Heart left ventricle (tissue), 16 donors: ENCODE measurements at regions of chr4 and their contacts with region 1.

Region 1: DNA sequence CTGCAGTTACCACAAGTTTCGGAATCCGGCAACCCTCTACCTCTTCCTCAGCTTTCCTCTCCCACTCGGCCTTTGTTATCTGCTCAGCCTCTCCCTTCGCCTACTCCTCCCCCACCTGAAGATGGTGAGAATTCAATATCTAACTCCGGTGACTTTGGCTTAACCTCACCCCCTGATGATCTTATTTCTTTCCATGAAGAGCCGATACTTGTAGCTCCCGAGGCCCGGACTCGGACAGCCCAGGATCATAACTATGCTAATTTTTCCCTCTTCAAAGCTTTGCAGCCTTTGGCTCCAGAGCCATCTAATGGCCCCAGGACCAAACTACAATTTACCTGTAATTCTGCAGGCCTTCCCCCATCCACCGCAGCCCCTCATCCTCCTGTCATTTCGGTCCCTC is 32.0 kb upstream of the MGST2 start:
- DNase-seq: peak in 4 of 5 donors; percentile 20 to 57 (median 32)
- ATAC-seq: peak; percentile 92 to 98 (median 95)
- H3K4me3 ChIP-seq: peak overlapping the region in 11 of 12 donors; percentile 13 to 58 (median 42)
- H3K27ac ChIP-seq: peak overlapping the region in 9 of 12 donors; percentile 9 to 54 (median 42)
- H3K4me1 ChIP-seq: peaks cover 0 to 7% (median 0%) of the 10 kb centered on the region in 12 donors
- H3K27me3 ChIP-seq: no peaks in the 10 kb centered on the region
- CTCF ChIP-seq: peak; percentile 26 to 71 (median 62)
- POLR2A ChIP-seq: no peak

Region 2: GRCh38 chr4:139030614-139031235 is 602.9 kb before region 1 on chr4:
- intact Hi-C with region 1: loop called in 1 of 10 experiments (anchors 10 kb)
- DNase-seq: peak in 4 of 5 donors; percentile 63 to 75 (median 66)
- ATAC-seq: peak in 3 of 4 donors; percentile 28 to 47 (median 33)
- H3K4me3 ChIP-seq: no peak overlapping the region
- H3K27ac ChIP-seq: peak overlapping the region in 2 of 12 donors; percentile 90 to 93
- H3K4me1 ChIP-seq: peaks cover 0 to 20% (median 11%) of the 10 kb centered on the region in 12 donors
- H3K27me3 ChIP-seq: no peaks in the 10 kb centered on the region
- CTCF ChIP-seq: peak; percentile 61 to 87 (median 79)
- POLR2A ChIP-seq: no peak

Region 3: GRCh38 chr4:139416073-139416673 is 217.5 kb before region 1 on chr4:
- intact Hi-C with region 1: loop called in 5 of 10 experiments (anchors 5 to 10 kb)
- DNase-seq: no peak
- ATAC-seq: peak in 1 of 4 donors; percentile 36
- H3K4me3 ChIP-seq: no peak overlapping the region
- H3K27ac ChIP-seq: no peak overlapping the region
- H3K4me1 ChIP-seq: peaks cover 0 to 18% (median 5%) of the 10 kb centered on the region in 12 donors
- H3K27me3 ChIP-seq: no peaks in the 10 kb centered on the region
- CTCF ChIP-seq: peak; percentile 60 to 84 (median 72)
- POLR2A ChIP-seq: no peak

Region 4: DNA sequence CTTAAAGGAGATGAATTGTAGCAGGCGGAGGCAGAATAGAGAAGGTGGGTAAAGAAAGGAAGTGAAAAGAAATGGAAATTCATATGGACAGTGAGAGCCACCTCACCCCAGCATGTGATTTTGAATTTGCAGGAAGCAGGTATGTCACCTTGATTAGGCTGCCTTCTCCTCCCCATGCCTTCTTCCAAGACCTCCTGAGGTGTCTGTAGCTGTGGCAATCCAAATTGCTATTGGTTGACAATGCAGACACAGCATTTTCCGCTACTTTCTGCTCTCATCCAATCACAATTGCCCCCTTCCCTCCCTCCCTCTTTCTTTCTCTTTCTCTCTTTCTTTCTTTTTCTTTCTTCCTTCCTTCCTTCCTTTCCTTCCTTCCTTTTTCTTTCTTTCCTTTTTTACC is 141.2 kb before region 1 on chr4:
- intact Hi-C with region 1: loop called in 7 of 10 experiments (anchors 2 to 10 kb)
- DNase-seq: no peak
- ATAC-seq: no peak
- H3K4me3 ChIP-seq: no peak overlapping the region
- H3K27ac ChIP-seq: no peak overlapping the region
- H3K4me1 ChIP-seq: peaks cover 0 to 8% (median 0%) of the 10 kb centered on the region in 12 donors
- H3K27me3 ChIP-seq: no peaks in the 10 kb centered on the region
- CTCF ChIP-seq: no peak
- POLR2A ChIP-seq: no peak

Region 5: GRCh38 chr4:139501927-139502899 is 131.4 kb before region 1 on chr4:
- intact Hi-C with region 1: loop called in 9 of 10 experiments (anchors 2 to 10 kb)
- DNase-seq: no peak
- ATAC-seq: no peak
- H3K4me3 ChIP-seq: no peak overlapping the region
- H3K27ac ChIP-seq: no peak overlapping the region
- H3K4me1 ChIP-seq: peaks cover 0 to 17% (median 0%) of the 10 kb centered on the region in 12 donors
- H3K27me3 ChIP-seq: no peaks in the 10 kb centered on the region
- CTCF ChIP-seq: no peak
- POLR2A ChIP-seq: no peak

Region 6: GRCh38 chr4:139509727-139510410 is 123.8 kb before region 1 on chr4:
- intact Hi-C with region 1: loop called in 2 of 10 experiments (anchors 10 kb)
- DNase-seq: peak in 2 of 5 donors; percentile 27 to 40
- ATAC-seq: peak; percentile 52 to 72 (median 70)
- H3K4me3 ChIP-seq: no peak overlapping the region
- H3K27ac ChIP-seq: peak overlapping the region in 3 of 12 donors; percentile 6 to 47 (median 29)
- H3K4me1 ChIP-seq: peaks cover 0 to 22% (median 8%) of the 10 kb centered on the region in 12 donors
- H3K27me3 ChIP-seq: no peaks in the 10 kb centered on the region
- CTCF ChIP-seq: peak; percentile 22 to 63 (median 48)
- POLR2A ChIP-seq: no peak

Region 7: GRCh38 chr4:139603576-139604387 is 29.9 kb before region 1 on chr4:
- intact Hi-C with region 1: loop called in 1 of 10 experiments (anchors 2 kb)
- DNase-seq: peak in 2 of 5 donors; percentile 26 to 31
- ATAC-seq: peak in 3 of 4 donors; percentile 62 to 63 (median 63)
- H3K4me3 ChIP-seq: no peak overlapping the region
- H3K27ac ChIP-seq: no peak overlapping the region
- H3K4me1 ChIP-seq: peaks cover 0 to 15% (median 2%) of the 10 kb centered on the region in 12 donors
- H3K27me3 ChIP-seq: no peaks in the 10 kb centered on the region
- CTCF ChIP-seq: peak; percentile 59 to 80 (median 68)
- POLR2A ChIP-seq: no peak

Region 8: DNA sequence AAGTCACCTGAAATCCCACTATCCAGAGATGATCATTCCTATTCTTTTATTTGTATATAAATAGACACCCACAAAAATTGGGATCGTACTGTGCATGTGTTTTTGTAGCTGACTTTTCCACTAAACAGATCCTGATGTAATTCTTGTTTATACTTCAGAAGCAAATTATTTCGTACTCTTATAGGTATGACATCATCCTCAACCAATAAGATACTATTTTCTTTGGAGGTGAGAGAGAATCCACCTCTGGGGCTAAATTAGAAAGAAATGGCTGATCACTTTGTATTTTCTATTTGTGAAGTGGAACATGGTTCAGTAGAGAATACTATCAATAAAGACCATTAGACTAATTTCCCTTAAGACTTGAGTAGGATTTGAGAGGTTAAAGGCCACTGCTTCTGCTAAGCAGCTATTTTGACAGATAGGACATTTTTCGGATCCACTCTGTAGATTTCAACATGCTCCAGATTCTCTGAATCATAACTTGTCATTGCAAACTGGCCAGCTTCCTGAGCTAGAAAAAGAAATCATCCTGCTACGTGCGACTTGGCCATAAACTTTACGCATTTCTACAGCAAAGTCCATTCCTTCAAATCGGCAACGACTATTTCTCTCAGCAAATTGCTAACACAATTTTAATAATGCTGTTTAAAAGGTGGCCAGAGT is 87.0 kb after region 1 on chr4:
- intact Hi-C with region 1: no loop called
- DNase-seq: no peak
- ATAC-seq: no peak
- H3K4me3 ChIP-seq: no peak overlapping the region
- H3K27ac ChIP-seq: peak overlapping the region in 1 of 12 donors; percentile 23
- H3K4me1 ChIP-seq: peaks cover 0 to 12% (median 3%) of the 10 kb centered on the region in 12 donors
- H3K27me3 ChIP-seq: no peaks in the 10 kb centered on the region
- CTCF ChIP-seq: no peak
- POLR2A ChIP-seq: no peak